Transverse colon (tissue), 4 donors: ENCODE measurements at regions of chr2 and their contacts with region 1.

Region 1: DNA sequence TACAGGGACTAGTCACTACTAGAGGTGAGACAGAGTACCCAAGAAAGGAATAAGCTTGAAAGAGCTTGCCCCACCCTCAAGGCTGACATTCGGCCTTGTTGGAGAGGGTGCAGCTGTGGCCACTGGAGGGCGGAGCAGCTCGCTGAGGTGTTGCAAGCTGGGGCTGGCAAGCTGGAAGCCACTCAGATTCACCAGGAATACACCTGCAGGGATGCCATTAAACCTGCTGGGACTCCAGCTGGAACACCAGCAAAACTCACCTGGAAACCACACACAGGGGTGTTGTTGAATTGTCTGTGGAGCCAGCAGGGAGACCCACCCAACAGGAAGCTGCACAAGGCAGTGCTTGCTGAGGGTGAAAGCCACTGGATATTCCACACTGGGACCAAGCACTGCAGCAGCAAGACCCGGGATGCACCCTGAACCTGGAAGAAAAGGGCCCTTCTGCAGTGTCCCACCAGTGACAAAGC is 26.1 kb downstream of the KCTD18 start:
- DNase-seq: peak; percentile 77
- H3K4me3 ChIP-seq: no peak overlapping the region
- H3K27ac ChIP-seq: no peak overlapping the region
- H3K4me1 ChIP-seq: peaks cover 0 to 13% (median 0%) of the 10 kb centered on the region in 4 donors
- H3K27me3 ChIP-seq: no peaks in the 10 kb centered on the region
- CTCF ChIP-seq: peak; percentile 41 to 64 (median 55)
- EP300 ChIP-seq: no peak
- POLR2A ChIP-seq: no peak

Region 2: DNA sequence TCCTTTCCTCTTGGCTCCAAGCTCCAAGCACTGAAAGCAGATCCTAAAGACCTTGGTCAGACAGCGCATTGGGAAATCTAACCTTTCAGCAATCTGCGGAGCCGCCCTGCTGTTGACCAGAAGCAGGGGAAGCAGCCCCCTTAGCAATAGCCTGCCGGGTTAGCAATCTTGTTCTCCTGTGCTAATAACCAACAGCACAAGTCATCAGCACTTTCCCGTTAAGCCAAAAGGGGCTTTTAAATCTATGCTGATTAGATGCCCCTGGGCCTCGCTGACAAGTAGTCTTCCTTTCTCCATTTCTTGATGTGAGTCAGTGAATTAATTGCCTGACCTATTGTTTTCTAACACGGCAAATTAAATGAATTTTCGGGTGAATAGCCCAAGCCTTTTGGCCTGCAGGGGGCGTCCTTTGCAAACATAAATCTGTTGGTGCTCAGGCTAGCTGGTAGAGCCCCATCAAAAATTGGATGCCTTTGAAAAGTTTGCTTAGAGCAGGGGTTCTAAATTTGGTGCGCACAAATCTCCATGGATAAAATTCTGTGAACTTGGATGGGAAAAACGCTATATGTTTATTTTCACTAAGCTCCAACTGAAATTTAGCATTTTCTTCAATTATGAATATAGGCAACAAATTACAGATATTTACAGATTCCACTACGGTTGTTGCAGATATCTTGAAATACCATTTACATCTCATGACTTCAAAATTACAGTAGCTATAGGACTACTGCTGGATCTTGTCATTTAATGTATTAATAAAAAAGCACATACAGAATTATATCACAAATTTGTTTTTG is 503.7 kb before region 1 on chr2:
- in situ Hi-C with region 1: loop called in 3 of 4 experiments (anchors 5 to 10 kb)
- intact Hi-C with region 1: loop called (anchors 5 kb)
- DNase-seq: peak; percentile 87
- H3K4me3 ChIP-seq: no peak overlapping the region
- H3K27ac ChIP-seq: no peak overlapping the region
- H3K4me1 ChIP-seq: peaks cover 0 to 20% (median 7%) of the 10 kb centered on the region in 4 donors
- H3K27me3 ChIP-seq: no peaks in the 10 kb centered on the region
- CTCF ChIP-seq: peak; percentile 88 to 92 (median 90)
- EP300 ChIP-seq: no peak
- POLR2A ChIP-seq: no peak

Region 3: GRCh38 chr2:200428951-200429665 is 54.7 kb before region 1 on chr2:
- in situ Hi-C with region 1: no loop called
- intact Hi-C with region 1: no loop called
- DNase-seq: no peak
- H3K4me3 ChIP-seq: no peak overlapping the region
- H3K27ac ChIP-seq: no peak overlapping the region
- H3K4me1 ChIP-seq: no peaks in the 10 kb centered on the region
- H3K27me3 ChIP-seq: no peaks in the 10 kb centered on the region
- CTCF ChIP-seq: no peak
- EP300 ChIP-seq: no peak
- POLR2A ChIP-seq: no peak